GM23248 (cell line): ENCODE measurements at regions of chr13 and their contacts with region 1.

Region 1: GRCh38 chr13:45713721-45714120 is 11.6 kb downstream of the CBY2 start:
- DNase-seq: no peak
- H3K4me3 ChIP-seq: no peak overlapping the region
- H3K27ac ChIP-seq: no peak overlapping the region
- H3K4me1 ChIP-seq: no peaks in the 10 kb centered on the region
- H3K27me3 ChIP-seq: peaks cover 7% of the 10 kb centered on the region

Region 2: GRCh38 chr13:45630806-45631205 is 82.9 kb before region 1 on chr13:
- in situ Hi-C with region 1: loop called (anchors 5 kb)
- DNase-seq: peak; percentile 47
- H3K4me3 ChIP-seq: no peak overlapping the region
- H3K27ac ChIP-seq: no peak overlapping the region
- H3K4me1 ChIP-seq: peaks cover 16% of the 10 kb centered on the region; the same call in 1 of the 2 replicates
- H3K27me3 ChIP-seq: no peaks in the 10 kb centered on the region